ENCODE measurements at regions of chr15 and their contacts with region 1.

Region 1: GRCh38 chr15:54082836-54083492 is 104.7 kb downstream of the UNC13C start:
- DNase-seq: peak; percentile 19 to 72
- H3K4me3 ChIP-seq: no peak overlapping the region
- H3K27ac ChIP-seq: no peak overlapping the region
- H3K4me1 ChIP-seq: no peaks in the 10 kb centered on the region
- H3K27me3 ChIP-seq: no peaks in the 10 kb centered on the region
- CTCF ChIP-seq: peak; percentile 50 to 79 (median 60)
- EP300 ChIP-seq: no peak
- POLR2A ChIP-seq: no peak
- RAD21 ChIP-seq: peak; percentile 72 to 82

Region 2: DNA sequence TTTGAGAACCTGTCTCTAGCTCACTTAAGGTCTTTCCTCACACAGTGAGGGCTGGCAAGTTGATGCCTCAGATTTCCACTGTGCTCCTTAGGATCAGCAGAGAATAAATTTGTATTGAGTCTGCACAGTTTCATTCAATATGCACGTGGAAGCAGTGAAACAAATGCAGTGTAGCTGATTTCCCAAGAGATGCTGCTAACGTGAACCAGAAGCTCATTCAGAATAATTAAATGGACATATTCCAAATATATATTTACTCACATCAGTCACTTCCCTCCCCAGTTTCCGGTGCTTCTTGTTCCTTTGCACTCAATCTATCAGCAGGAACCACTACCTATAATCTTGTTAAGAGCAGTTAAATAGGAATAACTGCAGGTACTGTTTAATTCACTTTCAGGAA is 18.6 kb before region 1 on chr15:
- CTCF ChIA-PET with region 1: interaction called, 16 read pairs
- POLR2A ChIA-PET with region 1: no interaction called
- DNase-seq: no peak
- H3K4me3 ChIP-seq: no peak overlapping the region
- H3K27ac ChIP-seq: no peak overlapping the region
- H3K4me1 ChIP-seq: no peaks in the 10 kb centered on the region
- H3K27me3 ChIP-seq: no peaks in the 10 kb centered on the region
- CTCF ChIP-seq: no peak
- EP300 ChIP-seq: no peak
- POLR2A ChIP-seq: no peak
- RAD21 ChIP-seq: no peak

Region 3: DNA sequence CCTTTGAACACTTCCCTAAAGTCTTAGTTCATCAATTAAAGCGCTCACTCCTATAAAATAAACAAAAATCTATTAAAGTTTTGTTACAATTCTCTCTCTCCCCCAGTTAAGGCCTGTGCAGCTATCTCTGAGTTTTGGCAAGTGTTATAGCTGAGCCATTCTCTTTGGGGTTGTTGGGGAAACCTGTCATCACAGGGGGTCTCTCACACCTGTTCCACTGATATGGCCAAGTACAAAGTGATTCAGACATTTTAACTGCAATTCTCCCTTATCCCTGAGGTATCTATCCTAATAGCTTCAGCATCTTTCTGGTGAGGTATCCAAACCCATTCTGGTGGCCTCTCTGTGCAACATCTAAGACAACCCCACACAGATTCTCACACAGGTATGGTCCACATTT is 11.7 kb after region 1 on chr15:
- CTCF ChIA-PET with region 1: interaction called, 18 read pairs
- POLR2A ChIA-PET with region 1: no interaction called
- DNase-seq: no peak
- H3K4me3 ChIP-seq: no peak overlapping the region
- H3K27ac ChIP-seq: no peak overlapping the region
- H3K4me1 ChIP-seq: no peaks in the 10 kb centered on the region
- H3K27me3 ChIP-seq: no peaks in the 10 kb centered on the region; a peak in 1 of 7 replicates
- CTCF ChIP-seq: no peak
- EP300 ChIP-seq: no peak
- POLR2A ChIP-seq: no peak
- RAD21 ChIP-seq: no peak

Region 4: DNA sequence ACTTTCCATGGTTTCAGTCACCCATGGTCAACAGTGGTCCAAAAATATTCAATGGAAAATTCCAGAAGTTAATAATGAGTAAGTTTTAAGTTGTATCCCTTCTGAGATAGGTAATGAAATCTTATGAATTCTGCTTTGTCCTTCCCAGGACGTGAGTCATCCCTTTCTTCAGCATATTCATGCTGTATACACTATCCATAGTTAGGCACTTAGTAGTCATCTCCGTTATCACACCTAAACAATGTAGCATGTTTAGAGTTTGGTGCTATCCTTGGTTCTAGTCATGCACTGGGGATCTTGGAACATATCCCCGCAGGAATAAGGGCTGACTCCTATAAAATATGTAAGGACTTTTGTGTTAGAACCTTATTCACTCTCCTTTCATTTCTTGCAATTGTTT is 48.4 kb after region 1 on chr15:
- CTCF ChIA-PET with region 1: no interaction called
- POLR2A ChIA-PET with region 1: no interaction called
- DNase-seq: no peak
- H3K4me3 ChIP-seq: no peak overlapping the region
- H3K27ac ChIP-seq: no peak overlapping the region
- H3K4me1 ChIP-seq: no peaks in the 10 kb centered on the region
- H3K27me3 ChIP-seq: no peaks in the 10 kb centered on the region
- CTCF ChIP-seq: no peak
- EP300 ChIP-seq: no peak
- POLR2A ChIP-seq: no peak
- RAD21 ChIP-seq: no peak

Measured in H1 (cell line).